Right cardiac atrium (tissue), 5 donors: ENCODE measurements at regions of chr19 and their contacts with region 1.

Region 1: GRCh38 chr19:7104747-7105447 is 35.4 kb downstream of the ZNF557 start:
- DNase-seq: no peak
- ATAC-seq: peak in 1 of 2 donors; percentile 30
- H3K4me3 ChIP-seq: no peak overlapping the region
- H3K27ac ChIP-seq: no peak overlapping the region
- H3K4me1 ChIP-seq: no peaks in the 10 kb centered on the region
- H3K27me3 ChIP-seq: no peaks in the 10 kb centered on the region

Region 2: GRCh38 chr19:7069042-7069903 is 35.6 kb before region 1 on chr19 and contains the start of gene ZNF557:
- intact Hi-C with region 1: no loop called
- DNase-seq: peak; percentile 99 to 100 (median 100)
- ATAC-seq: peak; percentile 100
- H3K4me3 ChIP-seq: peak within 1 kb of the TSS; percentile 86
- H3K27ac ChIP-seq: peak within 1 kb of the TSS; percentile 49
- H3K4me1 ChIP-seq: peaks cover 3% of the 10 kb centered on the region
- H3K27me3 ChIP-seq: no peaks in the 10 kb centered on the region
- total RNA-seq, gene ZNF557: 4.8 to 5.8 (median 5.0) TPM

Region 3: GRCh38 chr19:7145494-7146485 is 40.9 kb after region 1 on chr19:
- intact Hi-C with region 1: loop called in 1 of 4 experiments (anchors 5 kb)
- DNase-seq: no peak
- ATAC-seq: no peak
- H3K4me3 ChIP-seq: no peak overlapping the region
- H3K27ac ChIP-seq: no peak overlapping the region
- H3K4me1 ChIP-seq: no peaks in the 10 kb centered on the region
- H3K27me3 ChIP-seq: no peaks in the 10 kb centered on the region